GM12878 (cell line): ENCODE measurements at regions of chr3 and their contacts with region 1.

Region 1: DNA sequence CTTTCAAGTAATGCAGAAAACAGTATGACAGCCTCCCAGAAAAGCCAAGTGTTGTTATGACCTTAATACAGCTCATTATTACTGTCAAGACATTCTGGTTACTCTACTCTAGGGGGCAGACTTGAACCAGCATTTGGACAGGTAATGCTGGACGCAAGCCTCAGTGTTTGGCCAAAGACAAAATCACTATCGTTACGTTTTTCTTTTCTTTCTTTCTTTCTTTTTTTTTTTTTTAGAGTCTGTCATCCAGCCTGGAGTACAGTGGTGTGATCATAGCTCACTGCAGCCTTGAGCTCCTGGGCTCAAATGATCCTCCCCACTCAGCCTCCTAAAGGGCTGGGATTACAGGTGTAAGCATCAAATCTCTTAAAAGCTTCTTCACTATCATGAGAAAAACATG is 29.4 kb upstream of the TMEM45A start:
- DNase-seq: peak; percentile 35
- ATAC-seq: peak; percentile 95
- H3K4me3 ChIP-seq: no peak overlapping the region
- H3K27ac ChIP-seq: no peak overlapping the region
- H3K4me1 ChIP-seq: peaks cover 10% of the 10 kb centered on the region
- H3K27me3 ChIP-seq: no peaks in the 10 kb centered on the region
- CTCF ChIP-seq: peak; percentile 65 to 78 (median 71); a peak in 5 of 6 replicates
- EP300 ChIP-seq: no peak
- POLR2A ChIP-seq: no peak
- RAD21 ChIP-seq: peak; percentile 99

Region 2: DNA sequence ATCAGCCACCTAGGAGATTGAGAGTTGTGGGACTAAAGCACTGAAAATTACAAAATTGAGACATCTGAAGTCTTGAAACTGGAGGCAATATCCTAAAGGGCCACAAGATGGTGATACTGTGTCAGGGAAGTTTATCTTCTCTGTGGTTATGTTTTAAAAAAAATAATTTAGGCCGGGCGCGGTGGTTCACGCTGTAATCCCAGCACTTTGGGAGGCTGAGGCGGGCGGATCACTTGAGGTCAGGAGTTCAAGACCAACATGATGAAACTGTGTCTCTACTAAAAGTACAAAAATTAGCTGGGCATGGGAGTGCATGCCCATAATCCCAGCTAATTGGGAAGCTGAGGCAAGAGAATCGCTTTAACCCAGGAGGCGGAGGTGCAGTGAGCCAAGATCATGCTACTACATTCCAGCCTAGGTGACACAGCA is 146.3 kb before region 1 on chr3:
- CTCF ChIA-PET with region 1: interaction called, 43 read pairs
- POLR2A ChIA-PET with region 1: interaction called, 6 read pairs
- RAD21 ChIA-PET with region 1: interaction called, 37 read pairs
- SMC1A ChIA-PET with region 1: interaction called, 50 read pairs
- in situ Hi-C with region 1: no loop called
- intact Hi-C with region 1: loop called (anchors 2 kb)
- DNase-seq: no peak
- ATAC-seq: peak; percentile 80
- H3K4me3 ChIP-seq: no peak overlapping the region
- H3K27ac ChIP-seq: no peak overlapping the region
- H3K4me1 ChIP-seq: peaks cover 3% of the 10 kb centered on the region; the same call in 1 of the 2 replicates
- H3K27me3 ChIP-seq: no peaks in the 10 kb centered on the region
- CTCF ChIP-seq: peak; percentile 66 to 67 (median 67)
- EP300 ChIP-seq: no peak
- POLR2A ChIP-seq: no peak
- RAD21 ChIP-seq: peak; percentile 81

Region 3: GRCh38 chr3:100480111-100480510 is 17.1 kb after region 1 on chr3:
- CTCF ChIA-PET with region 1: interaction called, 6 read pairs
- POLR2A ChIA-PET with region 1: no interaction called
- RAD21 ChIA-PET with region 1: interaction called, 5 read pairs
- SMC1A ChIA-PET with region 1: interaction called, 10 read pairs
- in situ Hi-C with region 1: no loop called
- intact Hi-C with region 1: no loop called
- DNase-seq: no peak
- ATAC-seq: no peak
- H3K4me3 ChIP-seq: no peak overlapping the region
- H3K27ac ChIP-seq: no peak overlapping the region
- H3K4me1 ChIP-seq: no peaks in the 10 kb centered on the region
- H3K27me3 ChIP-seq: no peaks in the 10 kb centered on the region; a peak in 1 of 4 replicates
- CTCF ChIP-seq: no peak
- EP300 ChIP-seq: no peak
- POLR2A ChIP-seq: no peak
- RAD21 ChIP-seq: no peak

Region 4: DNA sequence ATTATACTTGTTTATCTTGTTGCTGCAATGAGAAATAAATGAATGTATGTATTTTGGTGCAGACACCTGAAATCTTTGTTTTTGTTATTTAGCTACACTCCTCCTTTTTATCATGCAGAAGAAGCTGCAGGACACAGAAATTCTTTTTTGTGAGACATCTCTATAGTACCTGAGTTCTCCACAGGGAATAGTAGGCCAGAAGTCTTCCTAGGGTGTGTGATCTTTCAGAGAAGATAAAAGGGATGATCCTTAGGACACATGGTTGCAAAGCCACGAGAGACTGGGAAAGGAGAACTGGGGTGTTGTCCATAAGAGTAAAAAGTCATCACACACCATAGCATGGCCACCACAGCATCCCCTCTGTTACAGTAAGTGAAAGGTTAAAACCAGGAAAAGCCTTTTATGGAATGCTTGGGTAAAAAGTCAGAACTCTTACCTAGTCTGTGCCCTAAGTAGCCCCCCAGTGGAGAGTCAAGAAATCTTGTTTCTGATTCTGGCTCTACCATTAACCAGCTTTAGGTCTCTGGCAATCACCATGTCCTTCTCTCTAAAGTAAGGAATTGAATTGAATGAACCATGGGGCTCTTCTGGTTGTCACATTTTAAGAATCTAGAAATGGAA is 114.5 kb after region 1 on chr3:
- CTCF ChIA-PET with region 1: interaction called, 462 read pairs
- POLR2A ChIA-PET with region 1: no interaction called
- RAD21 ChIA-PET with region 1: interaction called, 5 read pairs
- SMC1A ChIA-PET with region 1: interaction called, 14 read pairs
- in situ Hi-C with region 1: no loop called
- intact Hi-C with region 1: no loop called
- DNase-seq: no peak
- ATAC-seq: no peak
- H3K4me3 ChIP-seq: no peak overlapping the region
- H3K27ac ChIP-seq: no peak overlapping the region
- H3K4me1 ChIP-seq: no peaks in the 10 kb centered on the region
- H3K27me3 ChIP-seq: no peaks in the 10 kb centered on the region
- CTCF ChIP-seq: no peak
- EP300 ChIP-seq: no peak
- POLR2A ChIP-seq: no peak
- RAD21 ChIP-seq: no peak

Region 5: GRCh38 chr3:100629421-100630127 is 166.6 kb after region 1 on chr3:
- CTCF ChIA-PET with region 1: interaction called, 102 read pairs
- POLR2A ChIA-PET with region 1: interaction called, 7 read pairs
- RAD21 ChIA-PET with region 1: interaction called, 134 read pairs
- SMC1A ChIA-PET with region 1: interaction called, 145 read pairs
- in situ Hi-C with region 1: no loop called
- intact Hi-C with region 1: loop called (anchors 1 kb)
- DNase-seq: no peak
- ATAC-seq: peak; percentile 45; the same call in 2 of the 3 replicates
- H3K4me3 ChIP-seq: no peak overlapping the region
- H3K27ac ChIP-seq: no peak overlapping the region
- H3K4me1 ChIP-seq: no peaks in the 10 kb centered on the region
- H3K27me3 ChIP-seq: no peaks in the 10 kb centered on the region
- CTCF ChIP-seq: no peak
- EP300 ChIP-seq: no peak
- POLR2A ChIP-seq: no peak
- RAD21 ChIP-seq: no peak

Region 6: DNA sequence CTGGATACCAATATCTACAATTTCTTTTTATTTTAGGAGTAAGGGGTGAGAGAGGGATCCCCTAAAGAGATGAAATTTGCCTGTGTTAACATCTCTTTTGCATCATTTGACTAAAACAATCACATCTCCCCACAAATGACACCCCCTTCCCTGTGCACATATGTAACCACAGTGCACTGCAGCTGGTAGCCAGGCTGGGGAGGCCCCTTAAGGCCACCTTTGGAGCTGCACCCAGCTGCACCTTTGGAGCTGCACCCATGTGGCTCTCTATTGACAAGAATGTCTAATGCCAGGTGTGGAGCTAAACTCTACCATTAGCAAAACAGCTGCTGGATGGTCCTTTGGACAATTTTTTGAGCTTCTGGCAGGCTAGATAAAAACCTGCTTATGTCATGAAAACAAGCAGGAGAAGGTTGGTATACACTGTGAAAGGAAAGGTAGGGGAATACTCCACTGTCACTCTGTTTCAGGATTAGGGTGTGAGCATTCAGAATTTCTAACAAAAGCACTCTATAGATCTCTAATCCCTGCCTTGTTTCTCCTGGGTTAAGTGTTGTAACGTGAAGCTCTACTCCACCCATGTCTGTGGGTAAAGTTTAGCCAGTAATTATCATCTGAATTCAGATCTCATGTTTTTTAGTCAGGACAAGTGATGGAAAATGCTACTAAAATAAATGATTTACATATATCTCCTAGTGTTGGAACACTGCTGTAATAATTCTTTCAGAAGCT is 298.4 kb after region 1 on chr3:
- CTCF ChIA-PET with region 1: interaction called, 16 read pairs
- POLR2A ChIA-PET with region 1: no interaction called
- RAD21 ChIA-PET with region 1: interaction called, 11 read pairs
- SMC1A ChIA-PET with region 1: interaction called, 5 read pairs
- in situ Hi-C with region 1: no loop called
- intact Hi-C with region 1: no loop called
- DNase-seq: no peak
- ATAC-seq: peak; percentile 95
- H3K4me3 ChIP-seq: no peak overlapping the region
- H3K27ac ChIP-seq: no peak overlapping the region
- H3K4me1 ChIP-seq: no peaks in the 10 kb centered on the region
- H3K27me3 ChIP-seq: no peaks in the 10 kb centered on the region
- CTCF ChIP-seq: peak; percentile 22 to 52 (median 38); a peak in 5 of 6 replicates
- EP300 ChIP-seq: no peak
- POLR2A ChIP-seq: no peak
- RAD21 ChIP-seq: 0 out of 2 replicates have a peak, but pooled peaks have one; percentile 23

Region 7: DNA sequence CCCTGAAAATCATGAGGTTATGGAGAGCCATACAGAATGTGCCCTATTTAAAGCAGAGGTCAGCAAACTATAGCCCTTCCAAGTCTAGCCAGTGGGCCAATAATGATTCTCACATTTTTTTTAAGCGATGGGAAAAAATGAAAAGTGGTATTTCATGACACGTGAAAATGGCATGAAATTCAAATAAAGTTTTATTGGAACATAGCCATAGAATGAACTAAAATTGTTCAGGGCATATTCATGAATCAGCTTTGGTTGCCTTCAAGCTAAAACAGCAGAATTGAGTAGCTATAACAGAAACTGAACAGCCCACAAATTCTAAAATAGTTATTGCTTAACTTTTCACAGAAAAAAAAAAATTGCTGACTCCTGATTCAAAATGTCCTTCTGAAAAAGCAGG is 350.8 kb after region 1 on chr3:
- CTCF ChIA-PET with region 1: no interaction called
- POLR2A ChIA-PET with region 1: no interaction called
- RAD21 ChIA-PET with region 1: no interaction called
- SMC1A ChIA-PET with region 1: no interaction called
- in situ Hi-C with region 1: no loop called
- intact Hi-C with region 1: no loop called
- DNase-seq: no peak
- ATAC-seq: no peak
- H3K4me3 ChIP-seq: no peak overlapping the region
- H3K27ac ChIP-seq: no peak overlapping the region
- H3K4me1 ChIP-seq: no peaks in the 10 kb centered on the region
- H3K27me3 ChIP-seq: peaks cover 0 to 3% of the 10 kb centered on the region in 2 experiments; a peak in 1 of 4 replicates
- CTCF ChIP-seq: no peak
- EP300 ChIP-seq: no peak
- POLR2A ChIP-seq: no peak
- RAD21 ChIP-seq: no peak